A673 (cell line): ENCODE measurements at regions of chr17 and their contacts with region 1.

Region 1: DNA sequence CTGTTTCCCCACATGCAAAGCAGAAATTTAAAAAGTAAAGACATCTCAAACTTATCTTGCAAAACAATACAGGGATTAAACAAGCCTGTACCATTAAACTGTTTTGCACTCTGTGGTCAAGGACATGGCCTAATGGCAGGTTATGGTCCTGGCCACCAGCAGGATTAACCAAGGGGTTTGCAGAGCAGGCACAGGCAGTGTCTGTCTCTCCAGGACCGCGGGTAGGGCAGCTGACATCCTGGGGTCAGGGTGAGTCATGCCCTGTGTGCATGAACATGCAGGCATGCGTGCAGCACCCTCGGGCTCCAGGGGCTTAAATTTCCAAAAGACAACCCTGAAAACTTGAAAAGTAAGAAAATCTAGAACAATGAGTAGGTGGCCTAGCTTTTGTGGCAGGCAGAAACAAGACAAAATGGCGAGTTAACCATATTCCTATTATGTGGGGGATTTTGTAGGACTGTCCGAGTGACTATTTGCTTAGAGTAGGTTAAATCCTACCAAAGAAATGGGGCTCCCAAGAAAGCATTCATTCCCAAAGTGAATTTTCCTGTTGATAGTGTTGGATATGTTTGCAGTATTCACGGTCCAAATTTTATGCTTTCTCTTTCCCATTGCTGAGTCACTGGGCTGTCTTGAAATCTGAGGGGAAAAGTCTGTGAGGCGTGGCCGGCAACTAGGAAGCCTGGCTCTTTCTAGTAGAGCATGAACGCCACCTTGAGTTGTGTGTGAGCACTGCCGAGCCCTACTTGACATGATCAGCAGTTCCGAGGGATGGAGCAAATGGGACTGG is 158.4 kb upstream of the FAM20A start:
- DNase-seq: peak; percentile 95
- H3K4me3 ChIP-seq: peak overlapping the region; percentile 13
- H3K27ac ChIP-seq: peak overlapping the region; percentile 78
- H3K4me1 ChIP-seq: peaks cover 7% of the 10 kb centered on the region
- H3K27me3 ChIP-seq: no peaks in the 10 kb centered on the region
- CTCF ChIP-seq: peak; percentile 95

Region 2: GRCh38 chr17:68172461-68172954 is 587.0 kb before region 1 on chr17:
- CTCF ChIA-PET with region 1: no interaction called
- POLR2A ChIA-PET with region 1: no interaction called
- intact Hi-C with region 1: loop called (anchors 10 kb)
- DNase-seq: peak; percentile 75
- H3K4me3 ChIP-seq: no peak overlapping the region
- H3K27ac ChIP-seq: no peak overlapping the region
- H3K4me1 ChIP-seq: no peaks in the 10 kb centered on the region
- H3K27me3 ChIP-seq: no peaks in the 10 kb centered on the region
- CTCF ChIP-seq: peak; percentile 93

Region 3: DNA sequence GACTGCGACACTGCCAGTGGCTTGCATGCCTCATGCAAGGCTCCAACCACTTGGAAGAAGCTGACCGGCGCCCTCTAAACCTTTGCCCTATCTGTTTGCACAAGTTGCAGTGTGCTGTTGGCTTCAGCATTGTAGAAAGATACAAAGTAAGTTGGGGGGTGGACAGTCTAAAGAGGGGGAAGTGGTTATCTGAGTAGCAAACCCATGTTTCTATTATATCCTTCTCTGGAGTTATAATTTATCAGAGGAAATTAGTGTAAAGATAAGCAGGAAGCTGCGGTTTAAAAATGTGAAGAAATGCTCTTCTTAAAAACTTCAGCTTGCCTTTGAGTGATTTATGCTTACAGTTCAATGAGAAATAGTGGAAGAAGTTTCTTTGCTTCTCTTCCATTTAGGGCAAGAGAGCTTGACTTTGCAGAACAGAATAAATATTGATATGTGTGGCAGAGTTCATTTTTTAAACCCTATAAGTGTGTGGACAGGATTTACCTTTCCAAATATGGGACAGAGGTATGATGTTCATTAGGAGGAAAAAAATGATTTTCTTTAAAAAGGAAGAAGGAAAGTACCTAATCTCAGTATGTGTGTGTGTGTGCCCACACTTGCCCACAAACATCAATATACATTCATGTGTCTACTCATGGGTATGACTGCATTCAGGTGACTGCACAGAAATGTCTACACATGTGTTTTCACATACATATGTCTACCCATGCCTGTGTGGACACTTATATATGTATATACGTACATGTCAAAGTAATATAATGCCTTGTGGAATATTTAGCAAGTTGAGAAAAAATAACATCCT is 503.6 kb before region 1 on chr17:
- CTCF ChIA-PET with region 1: no interaction called
- POLR2A ChIA-PET with region 1: no interaction called
- intact Hi-C with region 1: loop called (anchors 5 kb)
- DNase-seq: no peak
- H3K4me3 ChIP-seq: no peak overlapping the region
- H3K27ac ChIP-seq: no peak overlapping the region
- H3K4me1 ChIP-seq: no peaks in the 10 kb centered on the region
- H3K27me3 ChIP-seq: no peaks in the 10 kb centered on the region
- CTCF ChIP-seq: no peak

Region 4: DNA sequence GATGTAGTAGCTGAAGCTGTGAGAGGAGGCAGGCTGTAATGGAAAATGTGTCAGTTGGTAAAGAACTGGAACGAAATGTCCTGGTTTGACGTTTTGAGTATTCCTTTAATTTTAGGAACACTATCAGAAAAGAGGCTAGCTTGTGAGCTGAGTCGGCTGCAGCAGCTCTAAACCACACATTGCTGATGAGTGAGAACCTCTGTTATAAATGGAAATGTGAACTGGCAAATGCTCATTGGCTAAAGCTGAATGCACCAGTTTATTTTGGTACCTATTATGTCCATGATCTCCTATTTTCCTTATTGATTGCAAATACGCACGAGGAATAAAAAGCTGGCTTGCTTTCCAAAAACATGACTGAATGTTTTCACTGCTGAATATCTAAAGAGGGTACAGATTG is 291.2 kb before region 1 on chr17:
- CTCF ChIA-PET with region 1: no interaction called
- POLR2A ChIA-PET with region 1: no interaction called
- intact Hi-C with region 1: loop called (anchors 5 kb)
- DNase-seq: no peak
- H3K4me3 ChIP-seq: no peak overlapping the region
- H3K27ac ChIP-seq: no peak overlapping the region
- H3K4me1 ChIP-seq: no peaks in the 10 kb centered on the region
- H3K27me3 ChIP-seq: no peaks in the 10 kb centered on the region
- CTCF ChIP-seq: no peak

Region 5: GRCh38 chr17:68533887-68534694 is 225.4 kb before region 1 on chr17:
- CTCF ChIA-PET with region 1: no interaction called
- POLR2A ChIA-PET with region 1: no interaction called
- intact Hi-C with region 1: loop called (anchors 5 kb)
- DNase-seq: peak; percentile 40
- H3K4me3 ChIP-seq: no peak overlapping the region
- H3K27ac ChIP-seq: no peak overlapping the region
- H3K4me1 ChIP-seq: no peaks in the 10 kb centered on the region
- H3K27me3 ChIP-seq: no peaks in the 10 kb centered on the region
- CTCF ChIP-seq: peak; percentile 59